ENCODE measurements at regions of chr11 and their contacts with region 1.

Region 1: GRCh38 chr11:117426269-117426685 is 98.6 kb downstream of the CEP164 start:
- DNase-seq: peak; percentile 91
- H3K4me3 ChIP-seq: peak overlapping the region in 1 of 2 experiments; percentile 31; a peak in 1 of 4 replicates
- H3K27ac ChIP-seq: no peak overlapping the region
- H3K4me1 ChIP-seq: peaks cover 0 to 10% of the 10 kb centered on the region in 2 experiments; a peak in 1 of 4 replicates
- H3K27me3 ChIP-seq: no peaks in the 10 kb centered on the region
- CTCF ChIP-seq: peak; percentile 95
- EP300 ChIP-seq: no peak
- RAD21 ChIP-seq: peak; percentile 95

Region 2: DNA sequence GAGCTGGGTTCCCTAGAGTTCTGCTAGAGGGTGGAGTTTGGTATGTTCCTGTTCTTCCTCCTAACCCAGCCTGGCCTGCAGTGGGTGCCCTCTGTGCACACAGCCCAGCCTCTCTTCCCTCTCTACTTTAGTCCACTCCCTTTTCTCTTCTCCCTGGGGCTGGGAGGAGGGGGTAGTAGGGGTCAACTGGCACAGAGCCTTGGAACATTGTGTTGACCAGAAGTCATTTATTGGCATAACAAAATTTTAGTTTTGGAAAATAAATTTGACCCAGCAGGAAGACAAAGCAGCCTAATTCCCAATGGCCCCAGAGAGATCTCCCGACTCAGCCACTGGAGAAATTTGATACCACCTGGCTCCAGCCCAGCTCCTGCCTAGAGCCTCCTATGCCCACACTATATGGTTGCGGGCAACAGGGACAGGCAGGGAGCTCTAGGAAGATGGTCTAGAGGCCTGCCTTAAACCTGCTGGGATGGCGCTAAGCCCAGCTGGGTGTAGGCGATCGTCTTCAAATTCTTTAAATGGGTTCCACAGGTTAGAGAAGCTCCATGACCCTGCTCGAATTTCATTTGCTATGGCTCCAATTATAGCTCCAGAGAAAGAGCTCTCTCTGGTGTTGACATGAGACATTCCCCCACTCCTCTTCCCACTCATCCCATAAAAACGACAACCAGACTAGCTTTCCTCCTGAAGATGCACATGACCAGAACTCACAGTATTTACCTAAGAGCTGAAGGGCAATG is 204.3 kb before region 1 on chr11:
- CTCF ChIA-PET with region 1: no interaction called
- POLR2A ChIA-PET with region 1: no interaction called
- DNase-seq: no peak
- H3K4me3 ChIP-seq: no peak overlapping the region
- H3K27ac ChIP-seq: 0 out of 4 replicates have a peak overlapping the region, but pooled peaks of 1 of the 2 experiments have one; percentile 48
- H3K4me1 ChIP-seq: peaks cover 2 to 11% of the 10 kb centered on the region in 2 experiments; a peak in 2 of 4 replicates
- H3K27me3 ChIP-seq: no peaks in the 10 kb centered on the region
- CTCF ChIP-seq: no peak
- EP300 ChIP-seq: no peak
- RAD21 ChIP-seq: no peak

Region 3: GRCh38 chr11:117384041-117384440 is 42.2 kb before region 1 on chr11:
- CTCF ChIA-PET with region 1: interaction called, 13 read pairs
- POLR2A ChIA-PET with region 1: no interaction called
- DNase-seq: no peak
- H3K4me3 ChIP-seq: no peak overlapping the region
- H3K27ac ChIP-seq: peak overlapping the region in 1 of 2 experiments; percentile 43; a peak in 2 of 4 replicates
- H3K4me1 ChIP-seq: peaks cover 4 to 12% of the 10 kb centered on the region in 2 experiments; a peak in 2 of 4 replicates
- H3K27me3 ChIP-seq: no peaks in the 10 kb centered on the region
- CTCF ChIP-seq: no peak
- EP300 ChIP-seq: no peak
- RAD21 ChIP-seq: no peak

Region 4: GRCh38 chr11:117479372-117479771 is 53.1 kb after region 1 on chr11:
- CTCF ChIA-PET with region 1: interaction called, 11 read pairs
- POLR2A ChIA-PET with region 1: interaction called, 3 read pairs
- DNase-seq: no peak
- H3K4me3 ChIP-seq: no peak overlapping the region
- H3K27ac ChIP-seq: no peak overlapping the region
- H3K4me1 ChIP-seq: peaks cover 0 to 21% of the 10 kb centered on the region in 2 experiments; a peak in 1 of 4 replicates
- H3K27me3 ChIP-seq: no peaks in the 10 kb centered on the region
- CTCF ChIP-seq: peak; percentile 22; the same call in 1 of the 2 replicates
- EP300 ChIP-seq: no peak
- RAD21 ChIP-seq: no peak

Region 5: DNA sequence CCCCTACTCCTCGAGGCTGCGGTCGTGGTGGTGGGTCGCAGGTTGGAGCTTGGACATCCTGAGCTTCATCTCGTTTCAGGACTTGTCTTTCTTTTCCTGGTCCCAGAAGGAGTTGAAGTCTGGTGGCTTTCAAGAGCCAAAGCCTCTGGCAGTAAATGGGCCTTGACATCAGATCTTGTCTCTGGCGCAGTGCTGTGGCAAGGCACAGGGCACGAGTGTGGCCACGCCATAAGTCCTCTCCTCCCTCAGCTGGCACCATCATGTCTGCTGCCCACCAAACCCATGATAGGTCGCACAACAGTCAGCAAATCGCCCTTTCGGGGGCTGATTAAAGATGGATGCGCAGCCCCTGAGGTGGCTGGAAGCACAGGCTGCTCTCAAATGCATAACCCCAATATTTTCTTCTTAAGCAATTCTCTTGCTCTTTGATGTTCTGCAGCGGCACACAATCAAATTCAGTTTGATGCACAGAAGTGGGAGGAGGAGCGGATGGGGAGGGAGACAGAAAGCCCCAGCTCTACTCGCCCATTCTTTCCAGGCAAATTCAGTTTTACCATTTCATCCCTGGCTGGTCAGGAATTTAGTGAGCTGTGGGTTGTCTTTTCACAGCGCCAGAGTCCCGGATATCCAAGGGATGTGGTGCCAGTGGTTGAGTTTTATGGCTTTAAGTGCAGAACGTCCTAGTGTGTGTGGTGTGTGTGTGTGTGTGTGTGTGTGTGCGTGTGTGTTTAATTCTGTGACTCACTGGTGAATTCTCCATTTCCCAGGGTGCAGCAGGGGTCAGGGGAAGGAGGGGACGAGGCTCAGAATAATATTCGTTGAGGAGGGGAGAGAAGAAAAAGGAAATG is 208.7 kb after region 1 on chr11:
- CTCF ChIA-PET with region 1: interaction called, 10 read pairs
- POLR2A ChIA-PET with region 1: no interaction called
- DNase-seq: no peak
- H3K4me3 ChIP-seq: no peak overlapping the region
- H3K27ac ChIP-seq: no peak overlapping the region
- H3K4me1 ChIP-seq: no peaks in the 10 kb centered on the region; a peak in 1 of 4 replicates
- H3K27me3 ChIP-seq: no peaks in the 10 kb centered on the region
- CTCF ChIP-seq: no peak
- EP300 ChIP-seq: no peak
- RAD21 ChIP-seq: no peak

Region 6: DNA sequence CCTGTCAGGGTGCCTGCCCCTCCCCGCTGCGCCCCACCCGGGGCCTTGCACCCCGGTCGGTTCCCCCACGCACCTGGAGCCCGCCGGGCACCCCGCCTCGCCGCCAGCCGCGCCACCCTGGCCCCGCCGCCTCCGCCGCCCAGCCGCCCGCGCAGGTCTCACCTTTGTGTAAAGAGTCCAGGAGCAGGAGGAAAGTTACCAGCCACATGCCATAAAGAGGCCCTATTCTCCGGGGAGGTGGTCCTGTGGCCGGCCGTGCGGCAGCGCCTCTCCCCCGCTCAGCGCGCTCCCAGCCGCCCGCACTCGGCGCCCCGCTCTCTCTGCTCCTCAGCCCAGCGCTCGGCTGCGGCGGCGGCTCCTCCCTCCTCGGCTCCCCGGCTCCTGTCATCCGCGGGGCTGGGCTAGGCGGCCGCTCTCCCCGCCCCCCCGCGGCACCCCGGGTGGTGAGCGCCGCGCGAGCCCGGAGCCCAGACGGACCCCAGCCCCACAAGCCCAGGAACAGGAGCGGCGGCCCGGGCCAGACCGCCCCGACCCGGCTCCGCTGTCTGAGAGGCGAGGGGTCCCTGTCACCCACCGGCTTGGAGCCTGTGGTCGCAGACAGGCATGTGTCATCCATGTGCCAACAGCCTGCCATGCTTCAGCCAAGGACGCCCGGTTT is 370.7 kb after region 1 on chr11 and contains the start of gene DSCAML1:
- CTCF ChIA-PET with region 1: interaction called, 449 read pairs
- POLR2A ChIA-PET with region 1: no interaction called
- DNase-seq: peak; percentile 87
- H3K4me3 ChIP-seq: peak within 1 kb of the TSS in 1 of 2 experiments; percentile 34; a peak in 2 of 4 replicates
- H3K27ac ChIP-seq: no peak within 1 kb of the TSS
- H3K4me1 ChIP-seq: peaks cover 0 to 14% of the 10 kb centered on the region in 2 experiments; a peak in 1 of 4 replicates
- H3K27me3 ChIP-seq: peaks cover 35% of the 10 kb centered on the region
- CTCF ChIP-seq: no peak
- EP300 ChIP-seq: no peak
- RAD21 ChIP-seq: no peak
- polyA plus RNA-seq, gene DSCAML1: not detected in 2 replicates

Region 7: DNA sequence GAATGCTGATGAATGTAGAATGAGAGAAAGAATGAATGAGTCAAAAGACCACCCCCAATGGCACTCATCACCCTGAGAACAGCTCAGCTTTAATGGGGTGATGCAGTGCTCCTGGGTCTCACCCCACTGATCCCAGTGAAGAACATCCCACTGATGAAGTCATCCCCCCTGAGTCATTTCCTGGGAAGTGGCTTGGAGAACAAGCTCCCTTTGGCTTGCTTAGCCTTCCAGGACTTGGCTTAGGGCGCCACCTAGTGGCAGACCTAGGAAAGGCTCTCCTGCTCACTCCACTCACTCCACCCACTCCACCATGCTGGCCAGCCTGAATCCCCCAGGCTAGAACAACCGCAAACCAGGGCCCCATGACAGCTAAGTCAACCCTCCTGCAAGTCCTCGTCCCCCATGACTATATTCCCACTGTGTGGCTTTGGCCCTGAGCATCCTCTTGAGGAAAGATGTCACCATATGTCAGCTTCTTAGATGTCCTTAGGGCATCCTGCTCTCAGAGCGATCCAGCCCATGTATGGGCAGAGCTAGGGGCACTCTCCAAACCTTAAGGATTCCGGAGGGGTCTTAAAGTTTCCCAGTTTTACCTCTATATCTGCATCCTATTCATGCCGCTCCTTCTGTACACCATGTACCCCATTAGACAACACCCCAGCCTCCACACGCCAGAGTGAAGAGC is 520.7 kb after region 1 on chr11:
- CTCF ChIA-PET with region 1: interaction called, 48 read pairs
- POLR2A ChIA-PET with region 1: no interaction called
- DNase-seq: peak; percentile 85
- H3K4me3 ChIP-seq: peak overlapping the region in 1 of 2 experiments; percentile 39; a peak in 1 of 4 replicates
- H3K27ac ChIP-seq: no peak overlapping the region
- H3K4me1 ChIP-seq: no peaks in the 10 kb centered on the region; a peak in 1 of 4 replicates
- H3K27me3 ChIP-seq: no peaks in the 10 kb centered on the region; the same call in 1 of the 2 replicates
- CTCF ChIP-seq: peak; percentile 96
- EP300 ChIP-seq: no peak
- RAD21 ChIP-seq: peak; percentile 99

Measured in SK-N-SH (cell line).